ENCODE measurements at regions of chr1 and their contacts with region 1.

Region 1: DNA sequence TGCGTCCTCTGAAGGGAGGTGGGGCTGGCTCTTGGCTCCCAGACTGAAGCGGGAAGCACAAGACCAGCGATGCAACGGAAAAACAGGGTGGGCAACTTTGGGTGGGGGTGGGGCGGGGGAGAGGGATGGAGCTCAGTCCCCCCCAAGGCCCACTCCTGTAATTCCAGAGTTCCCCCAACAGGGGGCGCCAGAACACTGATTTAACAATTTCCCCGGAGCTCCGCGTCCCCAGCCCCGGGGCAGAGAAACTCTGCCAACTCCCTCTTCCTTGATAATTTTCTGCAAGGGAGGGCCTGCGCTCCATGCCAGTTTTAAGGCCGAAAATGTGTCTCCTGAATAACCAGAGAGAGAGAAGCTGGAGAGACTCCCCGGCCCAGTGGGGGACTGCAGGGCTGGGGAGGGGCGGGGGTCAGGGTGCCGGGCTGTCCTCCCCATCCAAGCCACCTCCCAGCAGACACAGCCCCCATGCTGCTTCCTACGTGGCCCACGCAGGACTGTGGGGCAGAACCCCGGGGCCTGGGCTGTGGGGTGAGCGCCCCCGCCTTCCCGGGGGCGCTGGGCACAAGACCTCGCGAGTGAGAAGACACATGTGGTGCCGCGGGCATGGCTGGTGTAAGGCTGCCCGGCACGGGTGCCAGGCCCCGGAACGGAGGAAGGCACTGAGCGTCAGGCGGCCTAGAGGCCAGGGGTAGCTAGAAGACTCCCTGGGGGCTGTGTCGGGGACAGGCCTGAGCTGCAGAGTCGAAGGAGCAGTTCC is 51.4 kb downstream of the KIF21B start:
- DNase-seq: peak; percentile 85
- ATAC-seq: peak; percentile 55

Region 2: DNA sequence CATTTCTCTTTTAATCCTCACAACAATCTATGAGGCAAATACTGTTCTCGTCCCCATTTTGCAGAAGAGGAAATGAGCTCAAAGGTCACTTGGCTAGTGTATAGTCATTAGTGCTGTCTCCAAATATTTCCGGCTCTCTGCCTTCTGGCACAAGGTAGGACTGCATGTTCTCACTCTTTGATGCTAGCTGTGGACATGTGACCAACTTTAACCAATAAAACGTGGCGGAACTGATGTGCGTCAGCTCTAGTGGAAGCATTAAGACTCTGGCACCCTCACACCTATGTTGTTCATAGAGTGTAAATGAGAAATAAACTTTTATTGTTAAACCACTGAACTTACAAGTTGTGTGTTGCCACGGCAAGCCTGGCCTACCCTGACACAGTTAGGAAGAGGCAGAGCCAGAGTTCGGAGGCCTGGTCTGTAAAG is 56.3 kb after region 1 on chr1:
- intact Hi-C with region 1: no loop called
- DNase-seq: no peak
- ATAC-seq: peak; percentile 43

Region 3: DNA sequence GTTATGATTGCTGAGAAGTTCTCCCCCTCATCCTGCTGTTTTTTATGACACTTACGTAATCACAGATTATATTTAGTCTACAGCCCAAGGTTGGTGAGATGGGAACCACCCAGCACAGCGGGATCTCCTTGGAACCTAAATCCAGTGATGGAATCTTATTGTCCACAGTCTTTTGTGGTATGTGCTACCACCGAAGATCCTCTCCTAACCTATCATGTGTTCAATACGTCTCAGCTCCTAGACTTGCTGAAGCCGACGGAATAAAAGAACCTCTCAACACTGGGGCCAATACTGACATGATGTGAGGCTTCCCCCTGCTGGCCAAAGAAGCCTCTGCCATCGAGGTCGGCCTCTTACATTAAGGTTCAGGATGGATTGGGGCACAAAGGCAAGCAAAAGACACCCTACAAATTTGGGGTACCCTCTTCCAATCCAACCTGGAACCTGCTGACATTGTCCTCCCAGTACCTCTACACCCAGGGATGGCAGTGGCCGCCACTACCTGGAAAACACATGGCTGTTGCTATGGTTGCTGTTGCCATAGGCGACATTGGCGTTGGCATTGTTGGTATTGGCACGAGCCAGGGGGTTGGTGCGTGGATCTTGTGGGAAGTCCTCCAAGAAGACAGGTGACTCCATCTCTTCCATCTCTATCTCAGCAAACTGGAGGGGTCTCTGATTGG is 70.8 kb after region 1 on chr1:
- intact Hi-C with region 1: loop called (anchors 2 kb)
- DNase-seq: peak; percentile 73
- ATAC-seq: peak; percentile 87

Region 4: DNA sequence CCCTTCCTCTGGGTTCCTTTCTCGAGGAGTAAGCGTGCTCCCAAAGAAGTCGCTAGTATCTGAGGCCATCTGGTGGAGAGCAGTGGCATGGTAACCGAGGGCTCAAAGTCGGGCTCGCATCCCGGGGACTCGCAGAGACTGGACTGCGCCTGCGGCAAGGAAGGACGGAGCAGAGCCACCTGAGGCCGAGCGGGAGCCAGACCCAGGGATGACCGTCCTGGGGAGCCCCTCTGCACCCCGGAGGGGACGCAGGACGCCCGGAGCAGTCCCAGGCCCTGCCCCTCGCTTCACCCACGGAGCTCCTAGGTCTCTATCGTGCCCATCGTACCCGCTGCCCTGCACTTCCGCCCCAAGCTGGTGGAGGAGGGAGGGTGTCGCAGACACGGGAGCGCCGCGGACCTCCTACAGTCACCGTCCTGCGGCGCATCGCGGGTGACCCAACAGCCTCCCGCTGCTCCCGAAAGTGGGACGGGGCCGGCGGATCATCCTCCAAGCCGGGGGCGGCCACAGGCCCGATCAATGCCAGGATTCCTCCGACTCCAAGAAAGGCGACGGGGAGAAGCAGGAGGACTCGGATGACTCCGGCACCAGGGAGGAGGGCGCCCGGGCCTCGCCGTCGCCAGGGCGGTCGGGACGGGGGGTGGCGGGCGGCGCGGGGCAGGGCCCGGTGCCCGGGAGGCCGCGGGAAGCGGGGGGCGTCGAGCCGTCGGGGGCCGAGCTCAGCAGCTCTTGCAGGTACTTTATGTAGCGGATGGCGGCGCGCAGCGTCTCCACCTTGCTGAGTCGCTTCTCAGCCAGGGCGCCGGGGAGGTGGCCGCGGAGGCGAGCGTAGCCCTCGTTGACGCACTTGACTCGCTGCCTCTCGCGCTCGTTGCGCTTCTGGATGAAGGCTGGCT is 142.4 kb after region 1 on chr1:
- intact Hi-C with region 1: loop called (anchors 5 kb)
- DNase-seq: peak; percentile 90
- ATAC-seq: peak; percentile 95

Region 5: DNA sequence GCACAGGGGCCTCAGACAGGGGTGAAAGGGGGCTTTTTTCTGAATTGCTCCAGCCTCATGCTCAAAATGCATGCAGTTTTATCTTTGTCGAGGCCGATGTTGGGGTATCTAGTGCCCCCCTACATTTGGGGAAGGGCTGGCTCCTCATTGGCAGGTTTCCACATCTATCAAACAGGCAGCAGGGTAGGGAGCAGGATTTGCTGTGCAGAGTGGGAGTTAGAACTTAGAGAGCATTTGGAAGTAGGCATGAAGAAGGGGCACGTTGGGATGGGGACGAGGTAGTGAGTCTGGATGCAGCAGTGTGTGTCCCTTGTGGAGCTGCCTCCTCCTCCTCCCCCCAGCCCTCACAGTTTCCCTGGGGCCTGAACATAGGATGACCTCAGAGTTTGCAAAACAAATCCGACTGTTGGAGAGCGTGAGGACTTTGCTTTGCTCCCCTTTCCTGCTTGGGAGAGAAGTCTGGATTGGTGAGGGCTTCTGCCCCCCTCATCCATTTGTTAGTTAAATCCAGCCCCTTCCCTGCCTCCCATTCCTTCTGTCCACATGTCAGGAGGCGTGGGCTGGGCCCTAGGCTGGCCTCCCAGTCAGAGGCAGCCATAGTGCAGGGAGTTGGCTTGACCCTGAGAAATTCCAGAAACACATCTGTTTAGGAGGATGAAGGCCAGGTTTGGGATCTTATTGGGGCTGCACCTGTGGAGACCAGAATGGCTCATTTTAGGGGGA is 1113.7 kb after region 1 on chr1:
- intact Hi-C with region 1: no loop called
- DNase-seq: no peak
- ATAC-seq: peak; percentile 79